ENCODE measurements at regions of chr1 and their contacts with region 1.

Region 1: DNA sequence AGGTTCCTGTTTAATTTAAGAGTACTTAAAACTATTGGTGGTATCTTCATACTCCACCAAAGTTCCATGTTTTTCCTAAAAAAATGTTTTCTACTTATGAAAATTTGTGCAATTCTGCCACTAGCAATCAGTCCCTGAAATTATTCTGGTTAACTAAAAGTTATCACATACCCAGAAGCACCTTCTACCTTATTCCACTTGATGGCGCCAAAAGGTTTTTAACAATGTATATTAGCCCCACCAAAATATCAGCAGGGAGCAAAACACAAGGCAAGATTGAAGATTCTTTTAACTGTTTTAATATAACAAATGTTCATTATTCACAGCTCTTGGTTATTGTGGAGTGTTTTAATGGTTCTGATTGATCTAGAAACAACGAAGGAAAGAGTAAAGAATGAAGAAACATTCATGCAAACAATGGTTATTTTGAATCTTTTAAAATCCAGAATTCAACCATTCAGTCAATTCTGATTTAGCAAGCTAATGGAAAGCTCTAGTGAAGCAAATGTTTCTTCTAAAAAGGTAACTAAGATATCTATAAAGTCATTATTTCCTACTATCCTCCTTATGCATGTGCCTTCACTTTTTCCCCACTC is 67.2 kb downstream of the TTLL7 start:
- DNase-seq: no peak
- ATAC-seq: peak; percentile 84
- H3K4me3 ChIP-seq: no peak overlapping the region
- H3K27ac ChIP-seq: no peak overlapping the region
- H3K4me1 ChIP-seq: no peaks in the 10 kb centered on the region
- H3K27me3 ChIP-seq: no peaks in the 10 kb centered on the region; a peak in 1 of 4 replicates
- CTCF ChIP-seq: peak; percentile 44 to 70 (median 59); a peak in 5 of 6 replicates
- EP300 ChIP-seq: no peak
- POLR2A ChIP-seq: no peak
- RAD21 ChIP-seq: peak; percentile 92

Region 2: GRCh38 chr1:83889707-83890106 is 42.0 kb before region 1 on chr1:
- CTCF ChIA-PET with region 1: no interaction called
- POLR2A ChIA-PET with region 1: no interaction called
- RAD21 ChIA-PET with region 1: no interaction called
- SMC1A ChIA-PET with region 1: no interaction called
- in situ Hi-C with region 1: no loop called
- intact Hi-C with region 1: no loop called
- DNase-seq: no peak
- ATAC-seq: no peak
- H3K4me3 ChIP-seq: no peak overlapping the region
- H3K27ac ChIP-seq: no peak overlapping the region
- H3K4me1 ChIP-seq: no peaks in the 10 kb centered on the region
- H3K27me3 ChIP-seq: no peaks in the 10 kb centered on the region
- CTCF ChIP-seq: no peak
- EP300 ChIP-seq: no peak
- POLR2A ChIP-seq: no peak
- RAD21 ChIP-seq: no peak

Region 3: GRCh38 chr1:83954166-83954823 is 22.5 kb after region 1 on chr1:
- CTCF ChIA-PET with region 1: no interaction called
- POLR2A ChIA-PET with region 1: no interaction called
- RAD21 ChIA-PET with region 1: no interaction called
- SMC1A ChIA-PET with region 1: no interaction called
- in situ Hi-C with region 1: no loop called
- intact Hi-C with region 1: no loop called
- DNase-seq: no peak
- ATAC-seq: no peak
- H3K4me3 ChIP-seq: no peak overlapping the region
- H3K27ac ChIP-seq: no peak overlapping the region
- H3K4me1 ChIP-seq: no peaks in the 10 kb centered on the region
- H3K27me3 ChIP-seq: no peaks in the 10 kb centered on the region
- CTCF ChIP-seq: no peak
- EP300 ChIP-seq: no peak
- POLR2A ChIP-seq: no peak
- RAD21 ChIP-seq: no peak

Region 4: DNA sequence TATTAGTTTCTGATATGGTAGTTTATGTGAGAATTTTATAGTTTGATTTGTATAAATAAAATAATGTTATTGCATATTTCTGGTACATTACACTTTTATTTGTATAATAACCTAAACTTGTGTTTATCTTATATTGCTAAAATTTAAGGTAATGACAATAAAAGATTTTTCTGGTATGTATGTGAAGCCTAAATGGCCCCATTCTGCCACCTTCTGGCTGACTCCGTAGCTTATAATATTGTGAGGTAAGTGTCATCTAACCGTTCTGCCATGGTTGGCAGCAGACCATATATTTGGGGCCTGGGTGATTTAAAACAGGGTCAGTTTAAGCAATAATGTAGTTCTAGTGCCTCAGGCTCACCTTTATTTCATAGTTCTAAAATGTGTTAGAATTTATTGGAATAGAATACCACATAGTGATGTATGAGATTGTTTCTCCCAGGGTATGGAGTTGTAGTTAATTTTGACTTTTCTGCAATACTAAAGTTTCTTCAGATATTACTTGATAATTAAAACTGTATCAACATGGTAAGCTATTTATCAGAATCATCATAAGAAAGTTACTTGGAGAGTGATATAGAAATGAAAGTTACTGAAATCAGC is 191.1 kb after region 1 on chr1:
- CTCF ChIA-PET with region 1: interaction called, 17 read pairs
- POLR2A ChIA-PET with region 1: no interaction called
- RAD21 ChIA-PET with region 1: interaction called, 11 read pairs
- SMC1A ChIA-PET with region 1: interaction called, 9 read pairs
- in situ Hi-C with region 1: no loop called
- intact Hi-C with region 1: loop called (anchors 1 kb)
- DNase-seq: no peak
- ATAC-seq: peak; percentile 77
- H3K4me3 ChIP-seq: no peak overlapping the region
- H3K27ac ChIP-seq: no peak overlapping the region
- H3K4me1 ChIP-seq: no peaks in the 10 kb centered on the region
- H3K27me3 ChIP-seq: no peaks in the 10 kb centered on the region
- CTCF ChIP-seq: peak; percentile 50 to 64 (median 58)
- EP300 ChIP-seq: no peak
- POLR2A ChIP-seq: no peak
- RAD21 ChIP-seq: peak; percentile 90

Region 5: DNA sequence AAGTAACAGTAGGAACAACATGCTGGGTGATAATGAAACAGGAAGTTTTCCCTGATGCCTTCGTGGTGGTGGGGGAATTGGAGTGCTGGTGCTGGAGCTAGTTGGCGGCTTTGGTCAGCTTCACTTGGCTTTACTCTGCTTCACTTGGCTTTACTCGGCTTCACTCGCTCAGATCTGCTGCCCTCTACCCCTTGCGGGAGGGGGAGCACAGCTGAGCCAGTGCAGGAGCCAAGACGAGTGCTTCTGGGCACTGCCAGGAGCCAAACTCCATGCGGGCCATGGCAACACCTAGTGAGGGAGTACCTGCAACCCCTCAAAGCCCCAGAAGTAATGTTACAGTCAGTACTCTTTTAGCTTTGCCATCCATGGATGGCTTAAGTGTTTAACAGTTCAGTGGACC is 201.7 kb after region 1 on chr1:
- CTCF ChIA-PET with region 1: no interaction called
- POLR2A ChIA-PET with region 1: no interaction called
- RAD21 ChIA-PET with region 1: no interaction called
- SMC1A ChIA-PET with region 1: no interaction called
- in situ Hi-C with region 1: loop called (anchors 5 kb)
- intact Hi-C with region 1: no loop called
- DNase-seq: no peak
- ATAC-seq: no peak
- H3K4me3 ChIP-seq: no peak overlapping the region
- H3K27ac ChIP-seq: no peak overlapping the region
- H3K4me1 ChIP-seq: no peaks in the 10 kb centered on the region
- H3K27me3 ChIP-seq: no peaks in the 10 kb centered on the region
- CTCF ChIP-seq: no peak
- EP300 ChIP-seq: no peak
- POLR2A ChIP-seq: no peak
- RAD21 ChIP-seq: no peak

Region 6: GRCh38 chr1:84632673-84633434 is 701.1 kb after region 1 on chr1:
- CTCF ChIA-PET with region 1: no interaction called
- POLR2A ChIA-PET with region 1: no interaction called
- RAD21 ChIA-PET with region 1: no interaction called
- SMC1A ChIA-PET with region 1: no interaction called
- in situ Hi-C with region 1: loop called (anchors 25 kb)
- intact Hi-C with region 1: loop called (anchors 10 kb)
- DNase-seq: no peak
- ATAC-seq: peak; percentile 73
- H3K4me3 ChIP-seq: no peak overlapping the region
- H3K27ac ChIP-seq: no peak overlapping the region
- H3K4me1 ChIP-seq: no peaks in the 10 kb centered on the region
- H3K27me3 ChIP-seq: no peaks in the 10 kb centered on the region
- CTCF ChIP-seq: no peak
- EP300 ChIP-seq: no peak
- POLR2A ChIP-seq: no peak
- RAD21 ChIP-seq: no peak

Measured in GM12878 (cell line).